Activated T-helper 1 cell treated with anti-CD3 and anti-CD28 coated beads, Interleukin-12 subunit alpha, Interleukin-12 subunit beta, Interleukin-2, Interleukin-4 antibody, amounts not matched to agents 30 ng/mL and 10 ng/mL and 1 ng/mL, durations not matched to agents 14 hours and 24 hours and 36 hours (primary cell): ENCODE measurements at regions of chr18 and their contacts with region 1.

Region 1: DNA sequence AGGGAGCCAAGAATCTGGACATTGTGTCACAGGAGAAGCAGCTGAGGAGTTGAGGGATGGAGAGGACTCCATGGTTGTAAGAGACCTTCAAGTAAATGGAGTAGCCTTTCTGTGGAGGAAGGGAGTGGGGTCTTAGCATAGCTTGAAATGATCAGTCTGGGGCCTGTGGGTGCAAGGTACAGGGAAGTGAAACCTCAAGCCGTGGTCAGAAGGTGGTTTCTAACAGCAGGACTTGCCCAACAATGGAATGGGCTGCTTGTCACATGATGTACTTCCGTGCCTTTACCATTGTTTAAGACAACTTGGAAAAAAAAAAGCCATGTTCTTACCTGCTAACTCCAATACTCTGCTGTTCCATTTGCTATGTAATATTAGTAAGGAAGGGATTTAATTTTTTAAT is 140.7 kb downstream of the LDLRAD4 start:
- DNase-seq: no peak
- H3K4me3 Mint-ChIP-seq: no peak overlapping the region
- H3K27ac Mint-ChIP-seq: no peak overlapping the region
- H3K4me1 Mint-ChIP-seq: peaks cover 4% of the 10 kb centered on the region
- H3K27me3 Mint-ChIP-seq: no peaks in the 10 kb centered on the region

Region 2: DNA sequence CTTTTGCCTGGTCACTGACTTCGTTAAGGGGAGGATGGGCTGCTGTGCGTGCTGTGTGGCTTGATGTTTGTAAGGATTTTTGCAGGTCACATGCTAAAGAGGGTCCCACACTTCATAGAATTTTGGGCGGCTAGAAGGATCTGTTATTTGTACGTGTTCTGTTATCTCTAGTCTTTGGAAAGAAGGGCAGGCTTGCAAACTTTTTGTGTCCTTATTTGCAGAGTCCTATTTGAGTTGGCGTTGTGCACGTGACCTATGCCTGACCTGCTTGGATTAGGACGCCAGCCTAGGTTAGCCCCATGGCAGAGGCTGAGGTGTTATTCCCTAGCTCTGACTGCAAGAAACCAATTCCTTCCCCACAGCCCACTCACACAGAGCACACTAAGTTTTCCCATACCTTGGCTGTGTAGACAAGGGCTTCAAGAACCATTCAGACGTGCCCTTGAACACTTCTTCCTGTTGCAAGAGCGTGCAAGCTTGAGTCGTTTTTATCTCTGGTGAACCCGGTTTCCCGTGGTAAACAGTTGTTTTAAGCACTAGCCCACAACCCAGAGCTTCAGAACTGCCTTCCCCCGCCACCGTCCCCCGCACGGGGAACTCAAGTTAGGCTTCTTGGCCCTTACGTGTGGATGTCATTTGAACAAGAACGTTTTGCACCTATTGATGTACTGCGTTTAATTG is 46.1 kb before region 1 on chr18:
- intact Hi-C with region 1: loop called (anchors 5 kb)
- DNase-seq: no peak
- H3K4me3 Mint-ChIP-seq: no peak overlapping the region
- H3K27ac Mint-ChIP-seq: peak overlapping the region; percentile 30
- H3K4me1 Mint-ChIP-seq: peaks cover 35% of the 10 kb centered on the region
- H3K27me3 Mint-ChIP-seq: no peaks in the 10 kb centered on the region